Activated CD4-positive, alpha-beta T cell treated with anti-CD3 and anti-CD28 coated beads, Interleukin-2, amount 10 ng/mL, durations not matched to agents 24 days and 14 days (primary cell): ENCODE measurements at regions of chr14 and their contacts with region 1.

Region 1: DNA sequence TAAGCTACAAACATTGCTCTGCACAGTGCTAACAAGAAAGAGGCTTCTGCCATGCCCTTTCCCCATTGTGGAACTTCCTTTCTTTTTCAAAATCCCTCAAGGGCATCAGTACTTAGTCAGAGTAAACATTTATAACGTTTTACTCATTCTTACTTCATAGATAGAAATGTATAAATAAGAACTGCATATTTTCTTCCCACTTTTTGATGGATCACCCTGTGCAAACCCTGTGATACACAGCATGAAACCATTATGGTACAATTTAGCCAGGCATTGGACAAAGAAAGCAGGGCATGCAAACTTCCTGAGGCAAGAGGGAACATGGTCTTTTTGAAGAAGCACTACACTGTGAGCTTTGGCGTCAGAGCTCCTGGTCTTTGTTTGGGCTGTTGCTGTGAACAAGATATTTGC is 113.8 kb upstream of the FOXG1 start:
- DNase-seq: no peak
- H3K4me3 Mint-ChIP-seq: no peak overlapping the region
- H3K27ac Mint-ChIP-seq: no peak overlapping the region
- H3K4me1 Mint-ChIP-seq: no peaks in the 10 kb centered on the region
- H3K27me3 Mint-ChIP-seq: no peaks in the 10 kb centered on the region

Region 2: DNA sequence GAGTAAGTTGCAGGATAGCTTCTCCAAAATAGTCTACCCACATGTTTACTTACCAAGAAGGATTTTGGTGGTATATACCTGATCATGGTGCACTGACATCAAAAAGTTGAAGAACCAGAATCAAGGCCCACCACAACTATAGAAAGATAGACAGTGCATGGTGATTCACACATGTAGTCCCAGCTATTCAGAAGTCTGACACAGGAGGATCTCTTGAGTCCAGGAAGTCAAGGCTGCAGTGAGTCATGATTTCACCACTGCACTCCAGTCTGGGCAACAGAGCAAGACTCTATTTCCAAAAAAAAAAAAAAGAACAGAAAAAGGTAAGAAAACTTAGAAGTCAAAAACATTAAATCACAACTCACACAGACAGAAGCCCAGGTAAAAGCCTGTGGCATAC is 308.4 kb before region 1 on chr14:
- intact Hi-C with region 1: loop called (anchors 5 kb)
- DNase-seq: no peak
- H3K4me3 Mint-ChIP-seq: no peak overlapping the region
- H3K27ac Mint-ChIP-seq: no peak overlapping the region
- H3K4me1 Mint-ChIP-seq: no peaks in the 10 kb centered on the region
- H3K27me3 Mint-ChIP-seq: no peaks in the 10 kb centered on the region